ENCODE measurements at regions of chr2 and their contacts with region 1.

Region 1: GRCh38 chr2:106624787-106625380 is 137.7 kb downstream of the CD8B2 start:
- DNase-seq: no peak
- H3K4me3 ChIP-seq: no peak overlapping the region
- H3K27ac ChIP-seq: no peak overlapping the region
- H3K4me1 ChIP-seq: no peaks in the 10 kb centered on the region
- CTCF ChIP-seq: no peak

Region 2: DNA sequence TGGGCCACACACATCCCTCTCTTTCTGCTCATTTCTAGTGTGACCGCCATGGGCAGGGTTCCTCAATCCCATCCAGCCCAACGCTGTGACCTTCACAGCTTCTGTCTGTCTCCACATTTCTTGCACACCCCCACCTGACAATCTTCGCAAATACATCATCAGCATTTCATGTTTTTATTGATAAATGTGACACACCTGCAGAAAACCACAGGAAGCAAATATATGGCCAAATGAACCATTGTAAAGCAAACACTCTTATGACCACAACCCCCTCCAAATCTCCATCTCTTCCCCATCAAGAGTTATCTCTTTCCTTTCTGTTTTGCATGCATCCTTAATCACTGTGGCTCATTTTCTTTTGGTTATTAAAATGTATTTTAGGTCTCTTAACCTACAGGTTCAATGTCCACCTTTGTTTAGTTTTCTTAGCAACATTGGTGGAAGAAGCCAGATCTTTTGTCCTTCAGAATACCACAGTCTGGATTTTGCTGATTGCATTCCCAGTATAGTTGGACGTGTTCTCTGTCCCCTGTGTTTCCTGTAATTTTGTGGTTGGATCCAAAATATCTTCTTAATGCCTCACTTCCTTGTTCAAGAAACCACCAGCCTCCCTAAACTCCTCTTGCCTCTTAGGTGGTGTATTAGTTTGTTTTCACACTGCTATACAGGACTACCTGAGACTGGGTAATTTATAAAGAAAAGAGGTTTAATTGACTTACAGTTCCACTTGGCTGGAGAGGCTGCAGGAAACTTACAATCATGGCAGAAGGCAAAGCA is 889.9 kb before region 1 on chr2:
- CTCF ChIA-PET with region 1: no interaction called
- POLR2A ChIA-PET with region 1: no interaction called
- intact Hi-C with region 1: no loop called
- DNase-seq: no peak
- H3K4me3 ChIP-seq: no peak overlapping the region
- H3K27ac ChIP-seq: peak overlapping the region; percentile 8
- H3K4me1 ChIP-seq: peaks cover 72% of the 10 kb centered on the region
- CTCF ChIP-seq: no peak

Region 3: DNA sequence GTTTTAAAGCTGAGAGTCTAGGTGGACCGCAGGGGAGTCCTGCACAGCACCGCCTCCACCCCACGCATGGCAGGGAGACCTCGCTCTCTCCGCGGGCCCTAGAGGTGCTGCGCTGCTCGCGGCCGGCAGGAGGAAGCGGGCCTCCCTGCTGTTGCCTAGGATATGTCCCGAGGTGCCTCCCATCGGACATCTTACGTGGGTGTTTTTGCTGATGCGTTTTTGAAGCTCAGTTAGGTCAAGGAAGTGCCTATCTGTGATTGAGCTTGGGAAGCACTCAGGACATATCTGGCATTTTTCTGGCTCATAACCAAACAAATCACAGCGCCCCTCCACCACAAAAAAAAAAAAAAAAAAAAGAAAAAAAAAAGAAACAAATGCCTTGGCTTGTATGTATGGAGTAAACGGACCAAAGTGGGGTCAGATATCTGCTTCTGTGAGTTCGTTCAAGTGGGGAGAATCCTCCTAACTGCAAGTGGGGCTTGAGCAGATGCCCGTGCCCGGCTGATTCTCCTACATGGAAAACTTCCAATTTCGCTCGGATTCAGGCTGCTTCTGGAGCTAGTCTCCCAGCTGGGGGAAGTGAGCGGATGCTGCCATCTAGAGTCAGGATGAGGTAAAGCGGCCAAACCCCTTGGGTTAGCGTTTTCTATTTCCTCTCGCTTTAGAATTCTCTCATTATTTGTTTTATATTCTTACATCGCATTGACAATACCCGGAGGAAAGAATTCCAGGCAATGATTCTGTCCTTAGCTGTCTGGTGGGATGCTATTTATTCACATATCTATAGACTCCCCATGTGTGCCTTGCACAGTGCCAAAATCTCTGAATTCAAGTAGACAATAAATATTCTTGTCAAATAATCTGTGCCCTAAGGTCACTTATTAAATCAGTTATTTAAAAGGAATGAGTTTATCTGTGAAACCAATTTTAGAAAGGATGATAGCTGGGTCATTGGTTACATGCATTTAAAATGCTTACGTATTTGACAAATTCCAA is 42.4 kb before region 1 on chr2:
- CTCF ChIA-PET with region 1: no interaction called
- POLR2A ChIA-PET with region 1: no interaction called
- intact Hi-C with region 1: no loop called
- DNase-seq: peak; percentile 50
- H3K4me3 ChIP-seq: peak overlapping the region; percentile 61
- H3K27ac ChIP-seq: no peak overlapping the region
- H3K4me1 ChIP-seq: no peaks in the 10 kb centered on the region
- CTCF ChIP-seq: peak; percentile 92

Region 4: DNA sequence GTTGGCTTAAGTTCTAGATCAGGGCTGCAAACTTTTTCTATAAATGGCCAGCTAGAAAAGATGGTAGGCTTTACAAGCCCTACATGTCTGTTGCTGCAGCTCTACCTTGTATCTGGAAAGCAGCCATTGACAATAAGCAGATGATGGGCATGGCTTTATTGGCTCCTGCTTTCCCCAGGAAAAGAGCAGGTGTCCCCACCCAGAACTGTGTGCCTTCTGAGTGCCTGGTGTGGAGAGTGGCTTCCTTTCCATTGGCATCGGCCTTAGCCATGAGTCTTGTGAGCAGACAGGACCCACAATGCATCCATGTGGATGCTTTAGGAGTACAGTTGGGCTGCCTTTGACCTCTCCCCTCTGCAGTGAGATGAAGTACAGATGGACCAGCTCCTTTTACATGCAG is 17.5 kb before region 1 on chr2:
- CTCF ChIA-PET with region 1: no interaction called
- POLR2A ChIA-PET with region 1: no interaction called
- intact Hi-C with region 1: no loop called
- DNase-seq: no peak
- H3K4me3 ChIP-seq: no peak overlapping the region
- H3K27ac ChIP-seq: no peak overlapping the region
- H3K4me1 ChIP-seq: no peaks in the 10 kb centered on the region
- CTCF ChIP-seq: no peak

Region 5: DNA sequence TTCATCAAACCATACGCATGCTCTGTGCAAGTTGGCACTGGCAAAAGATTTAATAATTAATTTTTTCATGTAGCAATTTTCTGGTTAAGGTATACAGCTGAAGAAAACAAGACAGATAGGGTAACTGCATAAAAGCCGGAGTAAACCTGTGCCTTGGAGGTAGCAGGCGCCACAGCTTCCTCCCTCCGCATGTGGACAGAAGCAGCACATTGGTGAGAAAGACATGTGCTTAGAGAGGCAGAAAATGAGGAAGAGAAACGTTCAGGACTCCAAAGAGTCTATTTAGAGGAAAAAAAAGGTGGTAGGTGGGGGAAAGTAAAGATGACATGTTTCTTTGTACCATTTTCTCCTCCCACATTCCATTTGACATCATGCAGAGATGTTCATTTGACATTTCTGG is 251.8 kb after region 1 on chr2:
- CTCF ChIA-PET with region 1: no interaction called
- POLR2A ChIA-PET with region 1: no interaction called
- intact Hi-C with region 1: loop called (anchors 5 kb)
- DNase-seq: no peak
- H3K4me3 ChIP-seq: no peak overlapping the region
- H3K27ac ChIP-seq: no peak overlapping the region
- H3K4me1 ChIP-seq: no peaks in the 10 kb centered on the region
- CTCF ChIP-seq: no peak

Measured in OCI-LY7 (cell line).